Aorta (tissue), 5 donors: ENCODE measurements at regions of chr5 and their contacts with region 1.

Region 1: DNA sequence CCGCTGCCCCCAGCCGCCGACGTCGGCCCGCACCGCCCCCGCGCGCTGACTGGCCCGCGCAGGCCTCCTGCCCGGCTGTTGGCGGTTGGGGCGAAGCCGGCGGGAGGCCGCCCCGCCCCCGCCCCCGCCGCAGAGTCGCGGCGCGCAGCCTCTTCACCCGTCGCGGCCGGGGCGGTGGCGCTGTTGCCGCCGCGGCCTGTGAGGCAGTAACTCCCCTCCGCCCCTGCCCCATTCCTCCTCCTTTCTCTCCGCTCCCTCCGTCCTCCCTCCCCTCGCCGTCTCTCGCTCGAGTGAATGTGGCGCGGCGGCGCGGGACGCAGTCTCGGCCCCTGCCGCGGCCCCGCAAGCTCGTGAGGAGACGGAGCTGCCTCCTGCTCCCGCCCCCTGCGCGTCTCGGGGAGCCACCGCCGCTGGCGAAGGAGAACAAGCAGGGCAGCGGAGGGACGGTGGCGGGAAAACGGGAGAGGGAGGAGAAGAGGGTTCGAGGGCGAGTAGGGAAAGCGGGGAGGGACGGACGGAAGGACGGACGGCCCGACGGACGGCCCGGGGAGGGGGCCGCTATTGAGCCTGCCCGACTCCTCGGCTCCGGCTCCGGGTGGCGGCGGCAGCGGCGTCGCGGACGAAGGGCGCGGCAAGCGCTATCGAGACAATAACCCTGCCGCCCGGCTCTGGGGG is 637 bp upstream of the ERBIN start:
- DNase-seq: peak; percentile 86 to 93
- ATAC-seq: peak; percentile 95
- H3K4me3 ChIP-seq: peak overlapping the region; percentile 69 to 95
- H3K27ac ChIP-seq: peak overlapping the region; percentile 32 to 98
- H3K4me1 ChIP-seq: no peaks in the 10 kb centered on the region
- H3K27me3 ChIP-seq: no peaks in the 10 kb centered on the region

Region 2: GRCh38 chr5:65624571-65625555 is 300.9 kb before region 1 on chr5 and contains the starts of genes SHLD3 and TRAPPC13:
- intact Hi-C with region 1: loop called in 1 of 2 experiments (anchors 2 kb)
- DNase-seq: peak; percentile 88 to 90
- ATAC-seq: peak; percentile 97
- H3K4me3 ChIP-seq: peak within 1 kb of the TSS; percentile 90 to 99
- H3K27ac ChIP-seq: peak within 1 kb of the TSS; percentile 38 to 89
- H3K4me1 ChIP-seq: no peaks in the 10 kb centered on the region
- H3K27me3 ChIP-seq: no peaks in the 10 kb centered on the region
- total RNA-seq, gene SHLD3: 2.7 TPM
- total RNA-seq, gene TRAPPC13: 19.1 TPM

Region 3: GRCh38 chr5:65721720-65722574 is 203.8 kb before region 1 on chr5 and contains the starts of genes NLN and SGTB:
- intact Hi-C with region 1: loop called in 1 of 2 experiments (anchors 10 kb)
- DNase-seq: peak; percentile 91 to 95
- ATAC-seq: peak; percentile 98
- H3K4me3 ChIP-seq: peak within 1 kb of the TSS; percentile 93 to 97
- H3K27ac ChIP-seq: peak within 1 kb of the TSS in 1 of 2 donors; percentile 32
- H3K4me1 ChIP-seq: no peaks in the 10 kb centered on the region
- H3K27me3 ChIP-seq: no peaks in the 10 kb centered on the region
- total RNA-seq, gene NLN: 14.0 to 16.5 TPM
- total RNA-seq, gene SGTB: 21.9 to 23.2 TPM

Region 4: GRCh38 chr5:65809817-65810531 is 115.8 kb before region 1 on chr5:
- intact Hi-C with region 1: loop called in 1 of 2 experiments (anchors 10 kb)
- DNase-seq: peak; percentile 80 to 86
- ATAC-seq: peak; percentile 77
- H3K4me3 ChIP-seq: no peak overlapping the region
- H3K27ac ChIP-seq: no peak overlapping the region
- H3K4me1 ChIP-seq: peaks cover 0 to 2% of the 10 kb centered on the region in 2 donors
- H3K27me3 ChIP-seq: no peaks in the 10 kb centered on the region

Region 5: DNA sequence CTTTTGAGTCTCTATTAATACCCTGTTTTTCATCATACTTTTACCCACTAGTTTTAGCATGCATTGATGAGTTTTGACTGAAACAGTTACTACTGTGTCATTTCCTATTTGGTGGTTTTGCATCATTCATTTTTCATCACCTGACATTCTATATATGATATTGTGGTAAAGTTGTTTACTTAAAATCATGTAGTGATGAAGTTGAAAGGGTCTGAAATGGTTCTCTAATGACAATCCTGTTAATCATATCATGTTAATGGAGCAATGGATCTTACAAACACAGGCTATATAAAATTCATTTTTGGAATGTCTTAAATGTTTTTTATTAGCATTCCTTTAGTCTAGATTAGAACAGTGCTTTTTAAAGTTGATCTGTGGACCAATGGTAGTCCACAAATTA is 84.7 kb after region 1 on chr5:
- intact Hi-C with region 1: loop called (anchors 10 kb)
- DNase-seq: no peak
- ATAC-seq: no peak
- H3K4me3 ChIP-seq: no peak overlapping the region
- H3K27ac ChIP-seq: no peak overlapping the region
- H3K4me1 ChIP-seq: peaks cover 0 to 2% of the 10 kb centered on the region in 2 donors
- H3K27me3 ChIP-seq: no peaks in the 10 kb centered on the region

Region 6: DNA sequence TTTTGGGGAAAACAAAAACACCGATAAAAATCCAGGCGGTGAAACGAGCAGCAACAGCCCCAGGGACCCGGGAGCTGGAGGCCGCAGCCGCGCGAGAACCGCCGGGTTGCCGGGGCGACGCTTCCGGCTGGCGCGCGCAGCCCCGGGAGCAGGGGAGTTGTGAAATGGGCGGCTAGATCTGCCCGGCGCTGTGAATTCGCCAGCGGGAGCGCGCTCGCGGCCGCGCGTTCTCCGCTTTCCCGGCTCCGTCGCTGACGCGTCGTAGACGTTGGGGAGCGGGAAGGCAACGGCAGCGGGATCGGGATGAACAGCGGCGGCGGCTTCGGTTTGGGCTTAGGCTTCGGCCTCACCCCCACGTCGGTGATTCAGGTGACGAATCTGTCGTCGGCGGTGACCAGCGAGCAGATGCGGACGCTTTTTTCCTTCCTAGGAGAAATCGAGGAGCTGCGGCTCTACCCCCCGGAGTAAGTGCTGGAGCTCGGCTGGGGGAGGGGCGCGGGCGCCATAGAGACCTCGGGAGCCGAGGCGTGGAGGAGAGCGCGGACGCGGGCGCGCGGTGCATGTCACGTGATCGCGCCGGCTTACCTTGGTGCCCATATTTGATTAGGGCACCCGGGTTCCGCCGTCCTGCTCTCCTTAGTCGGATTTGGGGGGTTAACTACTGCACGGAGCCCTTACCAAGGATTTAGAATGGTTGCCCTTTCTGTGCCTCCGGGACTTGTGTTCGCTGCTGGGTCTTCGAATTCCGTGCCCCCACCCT is 218.5 kb after region 1 on chr5 and contains the start of gene SREK1:
- intact Hi-C with region 1: loop called (anchors 2 to 5 kb)
- DNase-seq: peak; percentile 95 to 97
- ATAC-seq: peak; percentile 98
- H3K4me3 ChIP-seq: peak within 1 kb of the TSS; percentile 82 to 95
- H3K27ac ChIP-seq: peak within 1 kb of the TSS; percentile 51 to 95
- H3K4me1 ChIP-seq: peaks cover 0 to 2% of the 10 kb centered on the region in 2 donors
- H3K27me3 ChIP-seq: no peaks in the 10 kb centered on the region
- total RNA-seq, gene SREK1: 83.3 to 94.3 TPM